G401 (cell line): ENCODE measurements at regions of chr18 and their contacts with region 1.

Region 1: GRCh38 chr18:54679318-54680149 is 88.5 kb downstream of the DYNAP start:
- DNase-seq: peak; percentile 77

Region 2: DNA sequence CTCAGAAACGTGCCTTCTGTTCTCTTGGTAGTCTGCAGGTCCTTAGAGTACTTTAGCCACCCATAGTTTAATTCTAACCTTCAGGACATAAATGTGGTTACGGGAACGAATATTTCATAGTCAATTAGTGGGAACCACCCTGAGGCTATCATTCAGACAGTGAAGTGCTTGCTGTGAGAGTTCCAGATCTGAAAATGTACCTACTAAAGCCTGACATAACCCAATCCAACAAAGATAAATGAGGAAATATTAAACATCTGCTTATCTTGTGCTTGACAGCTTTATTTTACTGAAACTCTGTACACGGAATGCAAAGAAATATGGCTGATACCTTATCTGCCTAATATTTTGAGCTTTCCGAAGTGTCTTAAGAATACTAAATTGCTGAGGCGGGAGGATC is 191.7 kb after region 1 on chr18:
- in situ Hi-C with region 1: no loop called
- DNase-seq: no peak

Region 3: DNA sequence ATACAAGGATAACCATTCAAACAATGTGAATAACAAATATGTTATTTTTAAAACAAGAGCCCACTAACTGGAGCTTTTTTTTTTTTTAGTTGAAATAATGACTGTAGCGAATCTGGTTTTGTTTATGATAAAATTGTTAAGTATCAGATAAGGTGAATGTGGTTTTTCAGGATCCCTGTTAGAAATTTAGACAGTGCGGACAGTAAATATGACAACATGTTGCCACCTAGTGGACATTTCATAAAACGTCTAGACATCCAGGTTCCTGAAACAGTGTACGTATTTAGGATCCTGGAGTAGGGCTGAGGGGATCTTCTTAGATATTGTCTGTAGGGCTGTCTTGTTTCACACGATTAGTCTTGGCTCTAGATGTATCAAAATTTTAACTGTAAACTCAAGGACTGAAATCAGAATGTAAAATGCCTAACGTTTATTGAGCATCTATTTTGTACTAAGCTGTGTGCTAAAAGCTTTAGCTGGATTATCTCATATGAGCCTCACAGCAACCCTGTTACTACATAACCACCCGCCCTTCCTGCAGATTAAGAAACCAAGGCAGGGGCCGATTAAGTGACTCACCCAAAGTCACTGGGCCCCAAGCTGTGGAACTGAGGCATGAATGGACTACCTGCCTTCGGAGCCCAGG is 303.6 kb after region 1 on chr18:
- in situ Hi-C with region 1: loop called (anchors 25 kb)
- DNase-seq: peak; percentile 59